Right cardiac atrium (tissue), 5 donors: ENCODE measurements at regions of chr13 and their contacts with region 1.

Region 1: DNA sequence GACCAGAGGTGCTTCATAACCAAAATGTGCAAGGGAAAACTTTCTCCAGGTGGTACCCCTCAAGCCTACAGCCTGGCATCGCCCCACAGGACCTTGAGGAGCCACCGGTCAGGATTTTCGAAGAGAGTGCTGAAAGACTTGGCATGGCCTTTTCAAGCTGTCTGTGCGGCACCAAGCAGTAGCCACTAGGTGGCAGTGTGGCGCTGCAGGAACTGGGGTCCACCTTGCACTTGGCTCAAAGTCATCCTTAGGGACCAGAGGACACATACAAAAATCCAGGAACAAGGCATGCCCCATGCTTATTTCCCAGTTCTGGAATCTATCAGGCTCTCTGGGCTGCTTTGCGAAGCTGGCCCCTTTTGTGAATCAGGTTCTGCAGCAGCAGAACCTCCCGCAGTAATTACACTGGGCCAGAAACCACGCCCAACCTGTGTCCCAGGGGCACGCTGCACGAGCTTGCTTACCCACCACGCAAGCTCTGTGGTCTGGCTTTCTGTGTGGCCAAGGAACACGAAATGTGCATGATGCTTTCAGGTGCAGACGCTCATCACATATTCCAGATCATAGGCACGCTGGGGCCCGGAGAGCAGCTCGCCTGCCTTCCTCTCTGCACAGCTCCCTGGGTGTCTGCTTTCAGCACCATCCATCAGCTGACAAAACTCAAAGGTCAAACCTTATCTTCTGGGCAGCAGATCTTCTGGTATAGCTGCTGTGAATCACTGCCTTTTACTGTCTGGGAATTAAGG is 87.2 kb downstream of the SLC7A1 start:
- DNase-seq: peak; percentile 86 to 95 (median 95)
- ATAC-seq: peak; percentile 83 to 84
- H3K4me3 ChIP-seq: no peak overlapping the region
- H3K27ac ChIP-seq: peak overlapping the region; percentile 3
- H3K4me1 ChIP-seq: no peaks in the 10 kb centered on the region
- H3K27me3 ChIP-seq: no peaks in the 10 kb centered on the region

Region 2: DNA sequence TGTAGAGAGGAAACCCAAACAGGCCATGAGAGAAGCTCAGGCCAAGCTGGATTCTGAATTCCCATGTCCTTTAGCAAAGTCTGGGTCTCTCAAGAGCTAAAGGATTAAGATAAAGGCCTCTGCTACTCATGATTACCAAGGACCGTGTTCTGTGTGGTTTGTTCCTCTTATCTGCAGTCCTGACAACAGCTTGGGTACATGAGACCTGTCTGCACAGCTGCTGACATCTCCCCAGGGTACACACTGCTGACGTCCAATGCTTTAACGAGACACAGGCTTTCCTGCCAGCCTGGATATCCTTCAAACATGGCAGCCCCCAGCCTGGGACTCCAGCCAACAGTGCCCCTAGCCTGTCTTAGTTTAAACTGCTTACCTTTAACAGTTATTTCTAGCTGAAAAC is 123.8 kb before region 1 on chr13:
- intact Hi-C with region 1: no loop called
- DNase-seq: peak in 1 of 3 donors; percentile 51
- ATAC-seq: peak in 1 of 2 donors; percentile 75
- H3K4me3 ChIP-seq: no peak overlapping the region
- H3K27ac ChIP-seq: peak overlapping the region; percentile 1
- H3K4me1 ChIP-seq: peaks cover 3% of the 10 kb centered on the region
- H3K27me3 ChIP-seq: no peaks in the 10 kb centered on the region

Region 3: GRCh38 chr13:29472332-29472961 is 35.9 kb before region 1 on chr13:
- intact Hi-C with region 1: no loop called
- DNase-seq: peak in 2 of 3 donors; percentile 66 to 67
- ATAC-seq: peak; percentile 29 to 43
- H3K4me3 ChIP-seq: no peak overlapping the region
- H3K27ac ChIP-seq: peak overlapping the region; percentile 2
- H3K4me1 ChIP-seq: no peaks in the 10 kb centered on the region
- H3K27me3 ChIP-seq: no peaks in the 10 kb centered on the region

Region 4: GRCh38 chr13:29707876-29708543 is 199.7 kb after region 1 on chr13:
- intact Hi-C with region 1: loop called in 2 of 4 experiments (anchors 2 to 5 kb)
- DNase-seq: peak in 2 of 3 donors; percentile 26 to 59
- ATAC-seq: peak; percentile 55 to 66
- H3K4me3 ChIP-seq: no peak overlapping the region
- H3K27ac ChIP-seq: no peak overlapping the region
- H3K4me1 ChIP-seq: peaks cover 4% of the 10 kb centered on the region
- H3K27me3 ChIP-seq: no peaks in the 10 kb centered on the region

Region 5: DNA sequence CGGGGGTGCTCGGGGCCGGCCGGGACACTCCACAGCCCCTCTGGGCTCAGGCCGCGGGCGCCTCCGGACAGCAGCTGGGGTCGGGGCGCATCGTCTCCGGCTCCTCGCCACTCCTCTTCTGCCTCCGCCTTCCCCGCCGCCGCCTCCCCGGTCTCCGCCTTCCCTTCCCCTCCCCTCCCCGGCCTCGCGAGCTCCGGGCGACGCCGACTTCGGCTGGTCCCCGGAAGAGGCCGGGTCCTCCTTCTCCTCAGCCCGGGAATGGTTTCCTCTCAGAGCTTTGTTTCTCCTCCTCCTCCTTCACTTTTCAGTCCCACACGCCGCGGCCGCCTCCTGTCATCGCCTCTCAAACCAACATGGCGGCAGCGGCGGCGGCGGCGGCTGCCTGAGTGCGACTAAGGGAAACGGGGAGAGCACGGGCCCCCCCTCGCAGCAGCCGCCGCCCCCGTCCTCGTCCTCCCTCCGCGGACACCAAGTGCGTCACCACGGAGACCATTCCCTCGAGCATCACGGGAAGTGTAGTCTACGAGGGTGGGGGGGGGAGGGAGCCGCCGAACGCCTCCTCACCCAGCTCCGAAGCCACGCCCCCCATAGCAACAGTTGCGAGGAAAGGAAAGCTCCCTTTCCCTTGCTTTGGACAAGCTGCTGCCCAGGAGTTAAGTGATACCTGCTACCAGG is 342.1 kb after region 1 on chr13 and contains the start of gene UBL3:
- intact Hi-C with region 1: loop called in 1 of 4 experiments (anchors 10 kb)
- DNase-seq: peak; percentile 97 to 98 (median 98)
- ATAC-seq: peak; percentile 98
- H3K4me3 ChIP-seq: peak within 1 kb of the TSS; percentile 88
- H3K27ac ChIP-seq: peak within 1 kb of the TSS; percentile 98
- H3K4me1 ChIP-seq: no peaks in the 10 kb centered on the region
- H3K27me3 ChIP-seq: no peaks in the 10 kb centered on the region
- total RNA-seq, gene UBL3: 23.5 to 25.8 (median 24.9) TPM